AG04449 (cell line): ENCODE measurements at regions of chr17 and their contacts with region 1.

Region 1: GRCh38 chr17:78250891-78251794 is 19.7 kb downstream of the TMEM235 start:
- DNase-seq: no peak
- H3K4me3 ChIP-seq: no peak overlapping the region
- CTCF ChIP-seq: peak; percentile 100

Region 2: GRCh38 chr17:78112518-78113226 is 138.5 kb before region 1 on chr17:
- CTCF ChIA-PET with region 1: interaction called, 31 read pairs
- POLR2A ChIA-PET with region 1: no interaction called
- DNase-seq: no peak
- H3K4me3 ChIP-seq: no peak overlapping the region
- CTCF ChIP-seq: peak; percentile 99

Region 3: DNA sequence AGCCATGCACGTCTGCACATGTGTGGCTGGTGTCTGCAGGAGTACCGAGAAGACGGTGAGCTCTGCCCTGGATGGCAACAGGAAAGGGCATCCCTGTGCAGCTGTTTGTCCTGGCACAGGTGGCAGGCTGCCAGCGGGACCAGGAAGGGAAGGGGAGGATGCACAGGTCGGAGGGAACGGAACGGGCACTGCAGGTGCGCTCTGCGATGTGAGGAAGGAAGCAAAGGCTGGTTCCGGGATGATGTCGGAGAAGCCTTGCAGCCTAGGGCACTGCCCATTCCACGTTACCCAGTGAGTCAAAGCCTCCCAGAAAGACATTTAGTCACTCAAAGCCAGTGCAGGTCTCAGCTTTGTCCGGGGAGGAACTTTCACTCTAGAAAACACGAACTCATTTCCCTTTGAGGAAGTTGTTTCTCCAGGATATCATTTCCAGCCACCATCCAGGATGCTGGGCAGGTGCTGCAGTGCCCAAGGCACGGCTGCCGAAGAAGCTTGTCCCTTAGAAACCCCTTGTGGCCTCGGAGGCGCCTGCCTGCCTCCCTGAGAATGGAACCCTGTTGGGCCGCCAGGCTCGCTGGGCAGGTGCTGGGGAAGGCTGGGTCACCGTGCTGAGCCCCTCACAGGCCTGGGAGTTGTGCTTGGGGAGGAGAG is 24.3 kb before region 1 on chr17:
- CTCF ChIA-PET with region 1: interaction called, 55 read pairs
- POLR2A ChIA-PET with region 1: no interaction called
- DNase-seq: no peak
- H3K4me3 ChIP-seq: no peak overlapping the region
- CTCF ChIP-seq: no peak

Region 4: GRCh38 chr17:78268951-78269905 is 18.1 kb after region 1 on chr17:
- CTCF ChIA-PET with region 1: interaction called, 25 read pairs
- POLR2A ChIA-PET with region 1: no interaction called
- DNase-seq: no peak
- H3K4me3 ChIP-seq: no peak overlapping the region
- CTCF ChIP-seq: no peak

Region 5: DNA sequence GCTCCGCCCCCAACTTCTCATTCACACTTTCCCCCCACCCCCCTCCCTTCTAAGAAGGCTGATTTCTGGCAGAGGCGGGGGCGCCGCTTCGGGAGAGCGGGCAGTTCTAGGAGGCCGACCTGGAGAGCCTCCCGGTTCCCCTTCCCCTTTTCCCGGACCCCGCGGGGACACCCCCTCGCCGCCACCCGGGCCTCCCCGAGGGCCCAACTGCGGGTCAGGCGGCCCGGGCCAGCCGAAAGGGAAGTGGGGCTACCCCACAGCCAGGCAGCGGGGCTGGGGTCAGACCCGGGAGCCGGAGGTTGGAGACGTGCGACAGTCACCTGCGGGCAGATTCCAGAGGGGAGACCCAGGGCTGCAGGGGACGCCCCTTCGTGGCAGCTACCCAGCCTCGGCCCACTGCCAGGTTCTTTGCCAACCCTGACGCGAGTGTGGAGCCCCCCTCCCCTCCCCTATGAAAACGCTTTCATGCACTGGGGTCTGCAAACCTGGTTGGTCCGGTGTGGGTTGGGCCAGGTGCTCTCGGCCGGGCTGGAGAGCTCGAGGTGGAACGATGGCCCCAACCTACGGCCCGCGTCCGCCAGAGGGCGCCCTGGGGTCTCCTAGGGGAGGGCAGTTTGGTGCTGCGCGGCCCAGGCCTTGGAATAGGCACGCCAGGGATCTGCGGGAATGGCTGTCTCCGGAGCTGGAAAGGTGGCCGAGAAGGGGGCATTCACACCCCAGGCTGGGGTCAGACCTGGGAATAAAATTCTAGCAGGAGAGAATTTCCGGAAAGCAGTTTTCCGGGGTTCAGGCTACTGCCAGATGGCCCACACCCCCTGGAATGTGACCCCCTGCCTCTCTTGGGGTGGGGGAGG is 109.5 kb after region 1 on chr17:
- CTCF ChIA-PET with region 1: interaction called, 28 read pairs
- POLR2A ChIA-PET with region 1: interaction called, 3 read pairs
- DNase-seq: no peak
- H3K4me3 ChIP-seq: peak overlapping the region; percentile 87
- CTCF ChIP-seq: peak; percentile 99